Activated B cell treated with CpG ODN at 0.5 μM for 24 hours (primary cell): ENCODE measurements at regions of chr2 and their contacts with region 1.

Region 1: GRCh38 chr2:88627056-88627855 is at the start of gene EIF2AK3:
- DNase-seq: peak; percentile 88
- ATAC-seq: peak; percentile 84
- H3K4me3 Mint-ChIP-seq: peak within 1 kb of the TSS; percentile 97
- H3K27ac Mint-ChIP-seq: peak within 1 kb of the TSS; percentile 94
- H3K4me1 Mint-ChIP-seq: peaks cover 7% of the 10 kb centered on the region
- H3K27me3 Mint-ChIP-seq: no peaks in the 10 kb centered on the region
- CTCF ChIP-seq: no peak
- total RNA-seq, gene EIF2AK3: 28.2 and 28.6 TPM in 2 replicates

Region 2: GRCh38 chr2:88590998-88591613 is 36.1 kb before region 1 on chr2:
- CTCF ChIA-PET with region 1: interaction called, 5 read pairs
- POLR2A ChIA-PET with region 1: interaction called, 9 read pairs
- intact Hi-C with region 1: loop called (anchors 1 kb)
- DNase-seq: no peak
- ATAC-seq: peak; percentile 88
- H3K4me3 Mint-ChIP-seq: no peak overlapping the region
- H3K27ac Mint-ChIP-seq: peak overlapping the region; percentile 70
- H3K4me1 Mint-ChIP-seq: peaks cover 25% of the 10 kb centered on the region
- H3K27me3 Mint-ChIP-seq: no peaks in the 10 kb centered on the region
- CTCF ChIP-seq: peak; percentile 35

Region 3: GRCh38 chr2:88606371-88607030 is 20.8 kb before region 1 on chr2:
- CTCF ChIA-PET with region 1: interaction called, 3 read pairs
- POLR2A ChIA-PET with region 1: interaction called, 59 read pairs
- intact Hi-C with region 1: loop called (anchors 1 kb)
- DNase-seq: no peak
- ATAC-seq: peak; percentile 83
- H3K4me3 Mint-ChIP-seq: peak overlapping the region; percentile 26
- H3K27ac Mint-ChIP-seq: peak overlapping the region; percentile 91
- H3K4me1 Mint-ChIP-seq: peaks cover 85% of the 10 kb centered on the region
- H3K27me3 Mint-ChIP-seq: no peaks in the 10 kb centered on the region
- CTCF ChIP-seq: no peak

Region 4: GRCh38 chr2:88669371-88670214 is 42.3 kb after region 1 on chr2:
- CTCF ChIA-PET with region 1: interaction called, 10 read pairs
- POLR2A ChIA-PET with region 1: interaction called, 8 read pairs
- intact Hi-C with region 1: loop called (anchors 1 kb)
- DNase-seq: no peak
- ATAC-seq: peak; percentile 88
- H3K4me3 Mint-ChIP-seq: no peak overlapping the region
- H3K27ac Mint-ChIP-seq: no peak overlapping the region
- H3K4me1 Mint-ChIP-seq: peaks cover 5% of the 10 kb centered on the region
- H3K27me3 Mint-ChIP-seq: no peaks in the 10 kb centered on the region
- CTCF ChIP-seq: no peak

Region 5: DNA sequence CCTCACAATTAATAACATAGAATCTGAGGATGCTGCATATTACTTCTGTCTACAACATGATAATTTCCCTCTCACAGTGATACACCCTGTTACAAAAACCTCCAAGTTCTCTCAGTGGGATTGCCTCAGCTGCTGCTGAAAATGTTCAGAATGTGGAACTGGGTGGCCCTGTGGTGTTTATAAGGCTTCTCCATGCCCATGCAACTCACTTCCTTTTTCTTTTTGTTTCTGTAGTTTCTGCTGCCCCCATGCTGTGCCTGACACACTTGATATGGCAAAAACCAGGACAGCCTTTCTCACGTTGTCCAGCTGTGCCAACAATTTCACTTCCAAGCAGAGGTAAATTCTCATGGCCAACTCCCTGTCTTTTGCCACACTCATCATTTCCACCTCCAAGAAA is 270.5 kb after region 1 on chr2:
- CTCF ChIA-PET with region 1: no interaction called
- POLR2A ChIA-PET with region 1: no interaction called
- intact Hi-C with region 1: no loop called
- DNase-seq: no peak
- ATAC-seq: peak; percentile 71
- H3K4me3 Mint-ChIP-seq: peak overlapping the region; percentile 32
- H3K27ac Mint-ChIP-seq: peak overlapping the region; percentile 63
- H3K4me1 Mint-ChIP-seq: peaks cover 18% of the 10 kb centered on the region
- H3K27me3 Mint-ChIP-seq: no peaks in the 10 kb centered on the region
- CTCF ChIP-seq: no peak